ENCODE measurements at regions of chr19 and their contacts with region 1.

Region 1: DNA sequence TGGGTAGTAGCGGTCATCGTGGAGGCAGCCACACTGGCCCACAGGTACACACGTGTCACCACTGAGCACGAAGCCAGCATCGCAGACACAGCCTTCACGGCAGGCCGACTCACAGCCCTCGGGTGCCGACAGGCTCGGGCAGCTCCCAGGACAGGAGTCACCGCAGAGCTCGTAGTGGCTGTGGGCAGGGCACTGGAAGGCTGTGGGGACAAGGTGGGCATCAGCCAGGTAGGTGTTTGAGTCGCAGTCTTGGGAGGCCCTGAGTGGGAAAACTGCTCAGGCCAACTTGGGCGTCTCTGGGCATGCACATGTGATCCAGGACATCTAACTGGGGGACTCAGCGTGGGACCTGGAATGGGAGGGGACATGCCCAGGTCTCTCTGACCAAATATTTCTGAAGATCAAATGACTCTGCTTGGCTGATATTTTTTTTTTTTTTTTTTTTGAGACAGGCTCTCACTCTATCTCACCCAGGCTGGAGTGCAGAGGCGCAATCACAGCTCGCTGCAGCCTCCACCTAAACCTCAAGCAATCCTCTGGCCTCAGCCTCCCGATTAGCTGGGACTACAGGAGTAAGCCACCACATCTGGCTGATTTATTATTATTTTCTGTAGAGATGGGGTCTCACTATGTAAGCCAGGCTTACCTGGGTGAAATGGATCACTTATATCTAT is 43.8 kb upstream of the FBL start:
- DNase-seq: peak; percentile 57 to 74
- ATAC-seq: peak; percentile 3
- H3K4me3 ChIP-seq: no peak overlapping the region
- H3K27ac ChIP-seq: no peak overlapping the region
- H3K4me1 ChIP-seq: no peaks in the 10 kb centered on the region
- H3K27me3 ChIP-seq: no peaks in the 10 kb centered on the region

Region 2: DNA sequence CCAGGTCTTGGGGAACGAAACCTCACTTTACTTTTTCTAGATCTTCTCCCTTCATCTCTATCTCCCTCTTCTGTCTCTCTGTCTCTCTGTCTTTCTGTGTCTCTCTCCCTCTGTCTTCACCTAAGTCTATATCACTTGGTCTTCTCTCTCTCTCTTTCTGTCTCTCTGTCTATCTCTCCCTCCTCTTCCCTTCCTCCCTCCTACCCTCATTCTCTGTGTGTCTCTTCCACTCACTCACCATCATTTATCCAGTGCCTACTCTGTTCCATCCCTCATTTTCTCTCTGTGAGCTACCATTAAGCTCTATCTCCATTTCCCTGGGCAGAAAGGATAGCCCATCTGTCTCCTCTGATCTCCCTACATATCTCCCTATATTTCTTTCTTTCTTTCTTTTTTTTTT is 11.6 kb before region 1 on chr19:
- intact Hi-C with region 1: loop called in 1 of 2 experiments (anchors 2 kb)
- DNase-seq: no peak
- ATAC-seq: no peak
- H3K4me3 ChIP-seq: no peak overlapping the region
- H3K27ac ChIP-seq: no peak overlapping the region
- H3K4me1 ChIP-seq: no peaks in the 10 kb centered on the region
- H3K27me3 ChIP-seq: no peaks in the 10 kb centered on the region